ENCODE measurements at regions of chr1 and their contacts with region 1.

Region 1: GRCh38 chr1:46223472-46223943 is 20.4 kb downstream of the LURAP1 start:
- DNase-seq: peak; percentile 77
- H3K4me3 ChIP-seq: no peak overlapping the region
- H3K27ac ChIP-seq: no peak overlapping the region
- H3K27me3 ChIP-seq: no peaks in the 10 kb centered on the region
- CTCF ChIP-seq: peak; percentile 98

Region 2: DNA sequence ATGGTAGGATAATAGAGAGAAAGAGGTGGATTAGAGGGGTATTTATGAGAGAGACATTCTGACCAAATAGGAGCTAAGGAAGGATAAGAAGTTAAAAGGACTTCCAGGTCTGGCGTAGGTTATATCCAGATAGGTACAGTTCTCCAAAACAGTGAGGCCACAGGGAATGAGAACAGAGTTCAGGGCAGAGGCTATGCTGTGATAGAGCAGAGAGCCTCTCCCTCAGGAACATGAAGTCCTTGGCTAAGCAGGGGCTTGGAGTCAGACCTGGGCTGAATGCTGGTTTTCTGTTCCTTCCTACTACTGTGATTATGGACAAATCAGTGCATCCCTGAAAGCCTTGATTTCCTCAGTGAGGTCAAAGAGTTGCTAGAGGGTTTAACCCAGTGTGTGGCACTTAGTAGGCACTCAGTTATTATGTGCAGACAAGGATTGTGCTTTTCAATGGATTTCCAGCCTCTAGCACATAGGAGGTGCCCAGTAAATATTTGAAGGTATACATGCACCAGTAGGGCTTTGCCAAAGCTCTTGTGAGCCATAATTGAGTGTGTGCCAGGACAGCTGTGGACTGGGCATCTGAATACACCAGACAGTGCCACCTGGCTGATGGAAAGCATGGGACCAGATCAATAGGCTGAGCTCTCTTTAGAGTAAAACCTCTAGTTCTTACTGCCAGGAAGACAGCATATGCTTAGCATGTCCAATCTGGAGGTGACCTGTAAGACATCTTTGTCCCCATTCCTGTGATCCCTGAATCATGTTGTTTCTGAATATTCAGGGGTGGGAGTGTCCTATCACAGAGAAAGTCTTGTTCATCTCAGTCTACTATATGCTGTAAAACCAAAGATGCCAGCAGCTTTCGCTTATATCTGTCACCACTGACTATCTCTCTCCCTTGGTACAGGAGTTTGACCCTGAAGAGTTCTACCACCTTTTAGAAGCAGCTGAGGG is 202.2 kb before region 1 on chr1:
- CTCF ChIA-PET with region 1: no interaction called
- POLR2A ChIA-PET with region 1: no interaction called
- DNase-seq: no peak
- H3K4me3 ChIP-seq: no peak overlapping the region
- H3K27ac ChIP-seq: no peak overlapping the region
- H3K27me3 ChIP-seq: no peaks in the 10 kb centered on the region
- CTCF ChIP-seq: no peak

Region 3: DNA sequence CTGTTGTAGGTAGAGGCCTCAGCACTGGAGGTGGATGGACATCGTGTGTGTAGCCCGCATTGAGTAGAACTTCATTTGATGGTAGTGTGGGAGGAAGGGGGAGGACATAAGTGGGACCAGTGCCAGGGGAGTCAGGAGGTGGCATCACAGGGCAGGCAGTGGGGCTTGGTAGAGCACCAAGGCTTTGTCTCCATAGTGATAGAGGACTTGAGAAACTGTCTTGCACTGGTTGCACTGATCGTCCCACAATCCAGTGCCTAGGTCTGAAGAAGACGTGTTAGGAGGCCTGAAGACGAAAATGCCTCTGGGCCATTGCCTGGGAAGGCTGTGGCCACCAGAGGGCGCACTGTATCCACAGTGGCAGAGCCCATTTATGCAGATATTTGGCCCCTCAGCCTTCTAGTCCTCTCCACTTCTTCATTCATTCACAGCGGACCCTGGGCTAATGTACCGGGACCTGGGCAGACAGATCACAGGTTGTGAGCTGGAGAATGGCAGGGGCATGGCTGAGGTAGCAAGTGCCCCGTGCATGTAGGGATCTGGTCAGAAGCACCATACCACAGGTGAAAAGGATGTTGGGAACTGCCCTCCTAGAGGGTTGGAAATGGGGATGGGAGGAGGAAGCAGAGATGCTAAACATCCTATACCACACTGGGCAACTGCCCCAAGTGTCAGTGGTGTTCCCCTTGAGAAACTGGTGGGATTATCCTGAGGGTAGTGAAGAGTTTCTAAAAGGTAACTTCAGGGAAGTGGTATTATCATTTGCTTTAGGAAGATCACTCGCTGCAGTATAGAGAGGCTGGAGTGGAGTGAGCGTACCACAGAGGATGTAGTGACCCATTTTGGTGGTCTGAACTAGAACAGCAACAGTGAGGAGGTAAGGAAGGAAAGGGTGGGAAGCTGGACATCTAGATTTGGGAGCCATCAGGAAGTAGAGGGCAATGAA is 186.3 kb before region 1 on chr1:
- CTCF ChIA-PET with region 1: interaction called, 50 read pairs
- POLR2A ChIA-PET with region 1: no interaction called
- DNase-seq: peak; percentile 59
- H3K4me3 ChIP-seq: no peak overlapping the region
- H3K27ac ChIP-seq: no peak overlapping the region
- H3K27me3 ChIP-seq: no peaks in the 10 kb centered on the region
- CTCF ChIP-seq: peak; percentile 99

Region 4: GRCh38 chr1:46179138-46180081 is 44.1 kb before region 1 on chr1:
- CTCF ChIA-PET with region 1: interaction called, 36 read pairs
- POLR2A ChIA-PET with region 1: interaction called, 4 read pairs
- DNase-seq: peak; percentile 73
- H3K4me3 ChIP-seq: no peak overlapping the region
- H3K27ac ChIP-seq: no peak overlapping the region
- H3K27me3 ChIP-seq: no peaks in the 10 kb centered on the region
- CTCF ChIP-seq: peak; percentile 97

Region 5: GRCh38 chr1:46210561-46210960 is 12.9 kb before region 1 on chr1:
- CTCF ChIA-PET with region 1: interaction called, 14 read pairs
- POLR2A ChIA-PET with region 1: interaction called, 4 read pairs
- DNase-seq: no peak
- H3K4me3 ChIP-seq: no peak overlapping the region
- H3K27ac ChIP-seq: no peak overlapping the region
- H3K27me3 ChIP-seq: no peaks in the 10 kb centered on the region
- CTCF ChIP-seq: no peak

Region 6: DNA sequence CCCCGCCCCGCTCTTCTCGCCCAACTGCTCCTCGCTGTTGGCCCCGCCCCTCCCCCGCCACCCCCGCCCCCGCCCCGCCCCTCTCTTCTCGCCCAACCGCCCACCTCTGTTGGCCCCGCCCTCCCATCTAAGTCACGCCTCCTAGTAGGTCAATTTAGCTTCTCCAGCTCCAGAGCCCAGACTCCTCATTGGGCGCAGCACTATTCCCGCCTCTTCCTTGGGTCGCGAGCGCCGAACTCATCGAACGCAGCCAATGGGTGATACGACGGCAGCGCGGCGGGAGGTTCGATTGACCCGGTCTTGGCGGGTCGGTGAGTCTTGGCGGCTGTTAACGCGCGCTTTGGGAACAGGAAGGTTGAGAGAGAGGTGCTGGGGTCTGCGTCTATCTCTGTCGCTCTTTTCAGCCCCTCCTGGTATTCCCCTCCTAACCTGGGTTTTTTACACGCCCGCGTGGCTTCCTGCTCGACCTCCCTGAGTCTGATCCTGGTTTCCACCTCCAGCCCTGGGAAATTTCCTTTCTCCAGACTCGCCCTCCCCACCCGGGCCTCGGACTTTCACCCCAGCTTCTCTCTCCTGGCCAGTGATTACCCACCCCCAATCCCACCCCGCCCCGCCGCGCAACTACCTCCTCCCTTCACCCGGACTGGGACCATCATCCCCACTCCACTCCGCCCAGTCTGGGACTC is 24.1 kb after region 1 on chr1 and contains the start of gene RAD54L:
- CTCF ChIA-PET with region 1: interaction called, 17 read pairs
- POLR2A ChIA-PET with region 1: interaction called, 5 read pairs
- DNase-seq: peak; percentile 98
- H3K4me3 ChIP-seq: peak within 1 kb of the TSS; percentile 92
- H3K27ac ChIP-seq: peak within 1 kb of the TSS; percentile 83
- H3K27me3 ChIP-seq: no peaks in the 10 kb centered on the region
- CTCF ChIP-seq: no peak
- polyA plus RNA-seq, gene RAD54L: 1.8 and 1.9 TPM in 2 replicates

Measured in AG04450 (cell line).